Endothelial cell of umbilical vein (primary cell): ENCODE measurements at regions of chr11 and their contacts with region 1.

Region 1: DNA sequence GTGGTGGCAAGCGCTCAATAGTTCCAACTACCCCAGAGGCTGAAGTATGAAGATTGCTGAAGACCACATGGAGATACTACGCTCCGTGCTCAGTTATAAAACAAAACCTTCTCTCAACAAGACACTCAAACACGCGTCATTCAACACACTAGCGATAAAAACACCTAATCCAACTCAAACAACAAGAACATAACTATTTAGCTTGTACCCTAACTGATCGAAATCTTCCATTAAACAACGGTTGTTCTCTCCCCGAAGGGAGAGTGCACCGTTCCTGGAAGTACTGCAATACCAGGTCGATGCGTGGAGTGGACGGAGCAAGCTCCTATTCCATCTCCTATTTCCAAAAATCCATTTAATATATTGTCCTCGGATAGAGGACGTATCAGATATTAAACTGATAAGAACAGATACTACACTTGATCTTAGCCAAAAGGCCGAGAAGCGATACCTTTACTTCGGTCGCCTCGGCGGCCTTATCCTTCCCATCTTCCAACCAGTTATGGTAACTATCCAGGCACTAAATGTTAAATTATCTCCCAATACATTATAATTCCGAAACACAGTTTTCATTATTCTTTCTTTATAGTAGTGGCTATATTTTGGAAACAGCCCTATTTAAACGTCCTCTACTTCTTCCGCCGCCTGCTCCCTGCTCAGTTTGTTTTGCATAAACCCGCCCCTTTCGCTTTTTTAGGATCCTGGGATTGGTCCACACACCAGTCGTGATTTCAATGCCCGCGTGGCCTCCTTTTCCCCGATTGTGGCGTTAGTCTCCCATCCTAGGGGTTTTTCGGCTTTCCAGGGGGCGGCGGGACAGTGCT is 2.2 kb upstream of the WDR74 start:
- DNase-seq: peak; percentile 99
- H3K4me3 ChIP-seq: peak overlapping the region in 2 of 3 experiments; percentile 9 to 15
- H3K27ac ChIP-seq: peak overlapping the region; percentile 89
- H3K4me1 ChIP-seq: peaks cover 7% of the 10 kb centered on the region
- H3K27me3 ChIP-seq: no peaks in the 10 kb centered on the region
- CTCF ChIP-seq: no peak
- POLR2A ChIP-seq: peak; percentile 100

Region 2: GRCh38 chr11:62556108-62556871 is 285.3 kb before region 1 on chr11:
- CTCF ChIA-PET with region 1: no interaction called
- POLR2A ChIA-PET with region 1: interaction called, 10 read pairs
- dilution Hi-C with region 1: no loop called
- intact Hi-C with region 1: loop called (anchors 5 kb)
- DNase-seq: peak; percentile 94
- H3K4me3 ChIP-seq: peak overlapping the region in 1 of 3 experiments; percentile 6
- H3K27ac ChIP-seq: peak overlapping the region; percentile 56
- H3K4me1 ChIP-seq: peaks cover 75% of the 10 kb centered on the region
- H3K27me3 ChIP-seq: no peaks in the 10 kb centered on the region
- CTCF ChIP-seq: no peak
- POLR2A ChIP-seq: peak; percentile 80

Region 3: GRCh38 chr11:62726915-62727763 is 114.4 kb before region 1 on chr11 and contains the start of gene HNRNPUL2:
- CTCF ChIA-PET with region 1: no interaction called
- POLR2A ChIA-PET with region 1: interaction called, 25 read pairs
- dilution Hi-C with region 1: no loop called
- intact Hi-C with region 1: loop called (anchors 1 kb)
- DNase-seq: peak; percentile 99
- H3K4me3 ChIP-seq: peak within 1 kb of the TSS; percentile 71 to 99 (median 94)
- H3K27ac ChIP-seq: peak within 1 kb of the TSS; percentile 67
- H3K4me1 ChIP-seq: peaks cover 15% of the 10 kb centered on the region
- H3K27me3 ChIP-seq: no peaks in the 10 kb centered on the region
- CTCF ChIP-seq: no peak
- POLR2A ChIP-seq: peak; percentile 92
- total RNA-seq, gene HNRNPUL2: 53.4 and 56.2 TPM in 2 replicates

Region 4: DNA sequence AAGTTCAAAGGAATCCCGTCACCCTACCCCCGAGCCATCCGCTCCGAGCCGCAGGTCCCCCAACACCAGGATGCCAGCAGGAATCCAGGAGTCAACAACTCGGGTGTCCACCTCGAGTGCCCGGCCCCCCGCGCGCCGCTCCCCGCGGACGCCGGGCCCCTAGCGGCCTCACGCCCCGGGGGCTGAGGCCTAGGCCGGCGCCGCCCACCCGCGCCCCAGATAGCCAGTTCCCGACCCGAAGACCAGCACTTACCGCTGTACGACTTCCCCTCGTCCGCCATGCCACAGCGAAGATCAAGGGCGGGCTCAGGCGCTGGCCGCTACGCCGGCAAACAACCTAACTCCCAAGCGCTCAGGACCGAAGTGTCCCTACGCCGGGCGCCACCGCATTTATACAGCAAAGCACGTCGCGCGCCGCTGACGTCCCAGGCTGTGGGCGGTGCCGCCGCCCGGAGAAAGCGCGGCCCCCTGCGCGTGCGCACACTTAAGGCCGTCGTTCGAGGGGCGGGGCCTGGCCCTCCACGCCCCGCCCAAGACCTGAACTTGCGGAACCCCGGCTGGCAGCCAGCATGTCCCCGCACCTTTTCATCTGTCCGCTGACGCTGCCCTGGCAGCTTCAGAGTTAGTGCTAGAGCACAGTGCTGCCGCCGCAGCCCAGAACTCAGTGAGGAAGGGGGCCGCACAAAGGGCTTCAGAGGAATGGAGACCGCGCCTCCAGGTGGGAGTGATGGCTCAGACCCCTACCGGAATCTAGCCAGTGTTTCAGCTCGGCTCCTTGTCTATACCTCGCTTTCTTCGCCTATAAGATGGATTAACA is 36.3 kb before region 1 on chr11 and contains the start of gene NXF1:
- CTCF ChIA-PET with region 1: no interaction called
- POLR2A ChIA-PET with region 1: interaction called, 24 read pairs
- dilution Hi-C with region 1: no loop called
- intact Hi-C with region 1: loop called (anchors 1 kb)
- DNase-seq: peak; percentile 97
- H3K4me3 ChIP-seq: peak within 1 kb of the TSS; percentile 70 to 93 (median 80)
- H3K27ac ChIP-seq: peak within 1 kb of the TSS; percentile 57
- H3K4me1 ChIP-seq: peaks cover 22% of the 10 kb centered on the region
- H3K27me3 ChIP-seq: no peaks in the 10 kb centered on the region
- CTCF ChIP-seq: peak in 1 of 2 donors; percentile 11
- POLR2A ChIP-seq: peak; percentile 100
- total RNA-seq, gene NXF1: 71.4 and 74.4 TPM in 2 replicates

Region 5: DNA sequence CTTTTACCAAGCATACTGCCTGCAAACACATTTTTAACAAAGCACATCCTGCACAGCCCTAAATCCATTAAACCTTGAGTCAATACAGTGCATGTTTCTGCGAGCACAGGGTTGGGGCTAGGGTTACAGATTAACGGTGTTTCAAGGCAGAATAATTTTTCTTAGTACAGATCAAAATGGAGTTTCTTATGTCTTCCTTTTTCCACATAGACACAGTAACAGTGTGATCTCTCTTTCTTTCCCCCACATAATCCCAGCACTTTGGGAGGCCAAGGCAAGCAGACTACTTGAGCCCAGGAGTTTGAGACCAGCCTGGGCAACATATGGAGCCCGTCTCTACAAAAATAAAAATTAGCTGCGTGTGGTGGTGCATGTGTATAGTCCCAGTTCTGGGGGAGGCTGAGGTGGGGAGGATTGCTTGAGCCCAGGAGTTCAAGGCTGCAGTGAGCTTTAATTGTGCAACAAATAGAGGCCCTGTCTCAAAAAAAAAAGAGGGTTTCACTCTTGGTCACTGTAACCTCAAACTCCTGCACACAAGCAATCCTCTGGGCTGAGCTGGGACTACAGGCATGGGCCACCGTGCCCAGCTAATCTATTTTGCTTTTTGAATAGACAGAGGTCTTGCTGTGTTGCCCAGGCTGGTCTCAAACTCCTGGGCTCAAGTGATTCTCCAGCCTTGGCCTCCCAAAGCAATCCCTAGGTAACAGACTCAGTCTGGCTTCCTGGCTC is 19.4 kb after region 1 on chr11:
- CTCF ChIA-PET with region 1: interaction called, 3 read pairs
- POLR2A ChIA-PET with region 1: interaction called, 186 read pairs
- dilution Hi-C with region 1: no loop called
- intact Hi-C with region 1: no loop called
- DNase-seq: no peak
- H3K4me3 ChIP-seq: no peak overlapping the region
- H3K27ac ChIP-seq: no peak overlapping the region
- H3K4me1 ChIP-seq: peaks cover 6% of the 10 kb centered on the region
- H3K27me3 ChIP-seq: no peaks in the 10 kb centered on the region
- CTCF ChIP-seq: no peak
- POLR2A ChIP-seq: no peak

Region 6: GRCh38 chr11:62880803-62881578 is 39.4 kb after region 1 on chr11 and contains the start of gene SLC3A2:
- CTCF ChIA-PET with region 1: interaction called, 7 read pairs
- POLR2A ChIA-PET with region 1: interaction called, 25 read pairs
- dilution Hi-C with region 1: no loop called
- intact Hi-C with region 1: loop called (anchors 1 kb)
- DNase-seq: peak; percentile 91
- H3K4me3 ChIP-seq: peak within 1 kb of the TSS; percentile 75 to 100 (median 95)
- H3K27ac ChIP-seq: peak within 1 kb of the TSS; percentile 100
- H3K4me1 ChIP-seq: peaks cover 45% of the 10 kb centered on the region
- H3K27me3 ChIP-seq: no peaks in the 10 kb centered on the region
- CTCF ChIP-seq: peak; percentile 63 to 89
- POLR2A ChIP-seq: peak; percentile 99
- total RNA-seq, gene SLC3A2: 190 and 208 TPM in 2 replicates